ENCODE measurements at regions of chr4 and their contacts with region 1.

Region 1: DNA sequence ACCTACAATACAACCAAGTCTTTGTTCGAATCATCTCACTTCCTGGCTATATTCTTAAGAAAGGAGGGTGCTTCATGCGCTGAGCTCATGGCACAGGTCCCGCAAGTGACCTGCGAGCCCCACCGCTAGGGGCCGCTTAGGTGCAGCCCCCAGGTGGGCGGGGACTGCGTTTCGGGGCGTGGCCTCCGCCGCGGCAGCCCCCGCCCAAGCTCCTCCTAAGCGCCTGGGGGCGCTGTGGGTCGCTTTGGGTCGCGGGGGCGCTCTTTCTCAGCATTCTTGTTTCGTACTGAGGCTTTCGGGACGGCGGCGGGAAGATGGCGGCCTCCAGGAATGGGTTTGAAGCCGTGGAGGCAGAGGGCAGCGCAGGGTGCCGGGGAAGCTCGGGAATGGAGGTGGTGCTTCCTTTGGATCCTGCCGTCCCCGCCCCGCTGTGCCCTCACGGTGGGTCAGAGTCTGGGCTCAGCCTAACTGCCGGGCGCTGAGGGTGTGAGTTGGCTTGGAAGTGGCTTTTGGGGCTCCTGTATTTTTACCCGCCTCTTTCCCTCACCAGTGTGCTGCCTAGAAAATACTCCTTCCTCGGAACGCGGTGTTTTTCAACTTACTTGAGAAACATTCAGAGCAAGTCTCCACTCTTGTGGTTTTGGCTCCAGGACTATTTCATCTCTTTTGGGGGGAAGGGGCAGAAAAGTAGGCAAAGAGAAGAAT is at the start of gene ZCCHC4:
- DNase-seq: peak; percentile 91
- H3K4me3 ChIP-seq: peak within 1 kb of the TSS; percentile 74
- H3K27ac ChIP-seq: peak within 1 kb of the TSS; percentile 76
- H3K4me1 ChIP-seq: peaks cover 7% of the 10 kb centered on the region
- H3K27me3 ChIP-seq: no peaks in the 10 kb centered on the region
- CTCF ChIP-seq: peak; percentile 99
- total RNA-seq, gene ZCCHC4: 7.4 to 7.9 TPM

Region 2: GRCh38 chr4:25159884-25160713 is 152.5 kb before region 1 on chr4 and contains the start of gene SEPSECS:
- intact Hi-C with region 1: loop called (anchors 10 kb)
- DNase-seq: peak; percentile 99
- H3K4me3 ChIP-seq: peak within 1 kb of the TSS; percentile 86
- H3K27ac ChIP-seq: peak within 1 kb of the TSS; percentile 99
- H3K4me1 ChIP-seq: peaks cover 5% of the 10 kb centered on the region
- H3K27me3 ChIP-seq: no peaks in the 10 kb centered on the region
- CTCF ChIP-seq: no peak
- total RNA-seq, gene SEPSECS: 13.1 to 16.3 TPM

Region 3: GRCh38 chr4:25234390-25235370 is 78.0 kb before region 1 on chr4:
- intact Hi-C with region 1: loop called (anchors 10 kb)
- DNase-seq: peak; percentile 60
- H3K4me3 ChIP-seq: peak overlapping the region; percentile 97
- H3K27ac ChIP-seq: peak overlapping the region; percentile 98
- H3K4me1 ChIP-seq: no peaks in the 10 kb centered on the region
- H3K27me3 ChIP-seq: no peaks in the 10 kb centered on the region
- CTCF ChIP-seq: peak; percentile 50

Region 4: DNA sequence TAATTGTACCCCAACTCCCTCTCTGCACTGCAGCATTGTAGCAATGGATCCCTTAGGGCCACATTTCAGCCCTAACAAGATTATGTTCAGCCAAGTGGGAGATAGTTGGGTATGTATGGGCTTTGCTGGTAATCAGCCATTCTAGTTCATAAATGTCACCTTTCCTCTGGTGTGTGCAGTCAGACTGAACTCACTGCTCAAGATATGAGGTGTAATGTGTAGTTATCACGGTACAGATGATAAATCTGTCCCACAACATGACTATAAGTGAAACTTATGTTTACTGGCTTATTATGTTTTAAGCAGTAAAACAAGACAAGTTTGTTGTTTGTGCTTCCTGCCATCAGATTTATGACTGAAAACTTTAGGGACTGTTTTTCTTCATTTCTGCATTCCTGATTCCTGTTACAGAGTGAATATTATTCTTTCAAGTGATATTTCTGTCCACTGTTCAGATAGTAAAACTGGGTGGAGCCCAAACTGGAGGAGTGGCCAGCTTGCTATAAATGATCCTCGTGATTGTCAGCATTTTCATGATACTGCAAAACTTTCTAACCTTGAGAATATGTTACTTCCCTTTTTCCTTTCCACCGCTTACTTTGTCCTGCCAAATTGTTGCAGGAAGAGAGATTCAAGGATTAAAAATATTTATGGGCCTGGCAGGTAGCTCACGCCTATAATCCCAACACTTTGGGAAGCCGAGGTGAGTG is 109.3 kb after region 1 on chr4:
- intact Hi-C with region 1: no loop called
- DNase-seq: peak; percentile 28
- H3K4me3 ChIP-seq: no peak overlapping the region
- H3K27ac ChIP-seq: peak overlapping the region; percentile 3
- H3K4me1 ChIP-seq: no peaks in the 10 kb centered on the region
- H3K27me3 ChIP-seq: no peaks in the 10 kb centered on the region
- CTCF ChIP-seq: no peak